Naive thymus-derived CD4-positive, alpha-beta T cell (primary cell): ENCODE measurements at regions of chr6 and their contacts with region 1.

Region 1: DNA sequence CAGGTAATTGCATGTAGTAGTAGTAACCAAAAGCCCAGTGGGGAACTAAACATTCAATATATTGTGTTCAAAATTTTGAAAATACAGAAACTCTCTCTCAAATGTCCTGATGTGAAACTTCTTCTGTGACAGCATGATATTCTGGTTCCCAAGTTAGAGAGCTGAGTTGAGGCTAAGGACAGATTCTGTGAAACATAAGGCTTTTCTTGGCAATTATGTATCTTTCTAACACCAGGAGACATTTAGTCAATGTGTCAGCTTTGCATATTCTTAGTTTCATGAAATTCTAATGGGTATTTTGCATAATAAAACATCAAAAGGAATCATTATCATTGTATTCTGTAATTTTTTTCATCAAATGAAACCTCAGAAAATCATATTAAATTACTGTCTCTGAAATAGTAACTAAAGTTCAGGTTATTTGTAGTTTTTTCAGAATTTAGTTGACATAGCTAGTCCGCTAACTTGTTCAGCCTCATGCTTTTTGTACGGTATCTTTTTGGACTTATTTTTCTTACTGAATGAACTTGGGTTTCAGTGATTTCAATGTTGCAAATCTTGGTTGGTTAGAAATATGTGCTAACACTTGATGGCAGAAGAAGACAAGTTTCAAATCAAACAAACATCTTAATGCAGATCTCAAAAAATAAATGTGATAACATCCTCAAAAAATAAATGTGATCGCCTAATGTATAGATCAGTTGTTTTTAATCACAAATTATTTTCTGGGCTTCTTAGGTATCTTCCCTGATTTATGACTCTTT is 70.4 kb downstream of the AKAP7 start:
- DNase-seq: peak in 2 of 9 donors; percentile 32 to 35
- ATAC-seq: no peak
- H3K4me3 ChIP-seq: no peak overlapping the region
- H3K4me3 Mint-ChIP-seq: peak overlapping the region in 8 of 10 donors; percentile 7 to 49 (median 31)
- H3K27ac ChIP-seq: peak overlapping the region; percentile 20
- H3K27ac Mint-ChIP-seq: peak overlapping the region in 8 of 9 donors; percentile 46 to 89 (median 74)
- H3K4me1 ChIP-seq: peaks cover 12 to 45% of the 10 kb centered on the region in 2 donors
- H3K4me1 Mint-ChIP-seq: peaks cover 36 to 72% (median 65%) of the 10 kb centered on the region in 7 donors
- H3K27me3 ChIP-seq: no peaks in the 10 kb centered on the region
- H3K27me3 Mint-ChIP-seq: no peaks in the 10 kb centered on the region

Region 2: DNA sequence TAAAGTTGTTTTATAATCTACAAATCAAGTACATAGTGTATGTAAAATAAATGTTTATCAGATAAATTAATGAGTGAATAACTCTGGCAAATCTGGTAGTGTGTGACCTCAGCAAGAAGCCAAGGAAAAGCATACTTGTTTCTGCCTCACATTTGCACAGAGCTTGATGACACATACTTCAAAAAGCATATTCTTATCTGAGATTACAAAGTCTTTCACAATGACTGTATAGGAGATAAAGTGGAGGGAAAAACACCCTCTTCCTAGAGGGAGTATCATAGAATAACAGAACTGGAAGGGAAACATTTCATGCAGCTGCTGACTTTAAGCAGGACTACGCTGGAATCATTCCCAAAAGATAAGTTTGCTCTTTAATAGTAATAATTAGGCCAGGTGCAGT is 98.5 kb before region 1 on chr6:
- CTCF ChIA-PET with region 1: no interaction called
- POLR2A ChIA-PET with region 1: no interaction called
- intact Hi-C with region 1: no loop called
- DNase-seq: no peak
- ATAC-seq: no peak
- H3K4me3 ChIP-seq: no peak overlapping the region
- H3K4me3 Mint-ChIP-seq: no peak overlapping the region
- H3K27ac ChIP-seq: no peak overlapping the region
- H3K27ac Mint-ChIP-seq: no peak overlapping the region
- H3K4me1 ChIP-seq: no peaks in the 10 kb centered on the region
- H3K4me1 Mint-ChIP-seq: no peaks in the 10 kb centered on the region
- H3K27me3 ChIP-seq: no peaks in the 10 kb centered on the region
- H3K27me3 Mint-ChIP-seq: peaks cover 0 to 12% (median 3%) of the 10 kb centered on the region in 5 donors

Region 3: GRCh38 chr6:131167773-131168172 is 37.9 kb before region 1 on chr6:
- CTCF ChIA-PET with region 1: no interaction called
- POLR2A ChIA-PET with region 1: no interaction called
- intact Hi-C with region 1: no loop called
- DNase-seq: no peak
- ATAC-seq: no peak
- H3K4me3 ChIP-seq: no peak overlapping the region
- H3K4me3 Mint-ChIP-seq: no peak overlapping the region
- H3K27ac ChIP-seq: no peak overlapping the region
- H3K27ac Mint-ChIP-seq: no peak overlapping the region
- H3K4me1 ChIP-seq: no peaks in the 10 kb centered on the region
- H3K4me1 Mint-ChIP-seq: no peaks in the 10 kb centered on the region
- H3K27me3 ChIP-seq: no peaks in the 10 kb centered on the region
- H3K27me3 Mint-ChIP-seq: no peaks in the 10 kb centered on the region

Region 4: GRCh38 chr6:131182991-131183425 is 22.7 kb before region 1 on chr6:
- CTCF ChIA-PET with region 1: interaction called, 19 read pairs
- POLR2A ChIA-PET with region 1: interaction called, 3 read pairs
- intact Hi-C with region 1: no loop called
- DNase-seq: peak in 8 of 9 donors; percentile 6 to 57 (median 47)
- ATAC-seq: peak; percentile 83
- H3K4me3 ChIP-seq: no peak overlapping the region
- H3K4me3 Mint-ChIP-seq: peak overlapping the region; percentile 10 to 85 (median 72)
- H3K27ac ChIP-seq: no peak overlapping the region
- H3K27ac Mint-ChIP-seq: peak overlapping the region; percentile 86 to 98 (median 94)
- H3K4me1 ChIP-seq: peaks cover 0 to 8% of the 10 kb centered on the region in 2 donors
- H3K4me1 Mint-ChIP-seq: peaks cover 5 to 22% (median 17%) of the 10 kb centered on the region in 7 donors
- H3K27me3 ChIP-seq: no peaks in the 10 kb centered on the region
- H3K27me3 Mint-ChIP-seq: no peaks in the 10 kb centered on the region

Region 5: GRCh38 chr6:131258816-131259476 is 53.3 kb after region 1 on chr6:
- CTCF ChIA-PET with region 1: no interaction called
- POLR2A ChIA-PET with region 1: no interaction called
- intact Hi-C with region 1: no loop called
- DNase-seq: no peak
- ATAC-seq: no peak
- H3K4me3 ChIP-seq: no peak overlapping the region
- H3K4me3 Mint-ChIP-seq: no peak overlapping the region
- H3K27ac ChIP-seq: no peak overlapping the region
- H3K27ac Mint-ChIP-seq: peak overlapping the region in 7 of 9 donors; percentile 1 to 94 (median 63)
- H3K4me1 ChIP-seq: peaks cover 0 to 11% of the 10 kb centered on the region in 2 donors
- H3K4me1 Mint-ChIP-seq: peaks cover 3 to 53% (median 37%) of the 10 kb centered on the region in 7 donors
- H3K27me3 ChIP-seq: no peaks in the 10 kb centered on the region
- H3K27me3 Mint-ChIP-seq: no peaks in the 10 kb centered on the region

Region 6: GRCh38 chr6:131303338-131303954 is 97.8 kb after region 1 on chr6:
- CTCF ChIA-PET with region 1: interaction called, 3 read pairs
- POLR2A ChIA-PET with region 1: no interaction called
- intact Hi-C with region 1: loop called in 1 of 2 experiments (anchors 1 kb)
- DNase-seq: no peak
- ATAC-seq: no peak
- H3K4me3 ChIP-seq: no peak overlapping the region
- H3K4me3 Mint-ChIP-seq: no peak overlapping the region
- H3K27ac ChIP-seq: no peak overlapping the region
- H3K27ac Mint-ChIP-seq: peak overlapping the region in 6 of 9 donors; percentile 2 to 51 (median 28)
- H3K4me1 ChIP-seq: peaks cover 0 to 10% of the 10 kb centered on the region in 2 donors
- H3K4me1 Mint-ChIP-seq: peaks cover 0 to 40% (median 24%) of the 10 kb centered on the region in 7 donors
- H3K27me3 ChIP-seq: no peaks in the 10 kb centered on the region
- H3K27me3 Mint-ChIP-seq: no peaks in the 10 kb centered on the region

Region 7: GRCh38 chr6:131368198-131368911 is 162.7 kb after region 1 on chr6:
- CTCF ChIA-PET with region 1: no interaction called
- POLR2A ChIA-PET with region 1: no interaction called
- intact Hi-C with region 1: loop called in 1 of 2 experiments (anchors 2 kb)
- DNase-seq: no peak
- ATAC-seq: peak; percentile 40
- H3K4me3 ChIP-seq: no peak overlapping the region
- H3K4me3 Mint-ChIP-seq: peak overlapping the region in 7 of 10 donors; percentile 4 to 63 (median 43)
- H3K27ac ChIP-seq: no peak overlapping the region
- H3K27ac Mint-ChIP-seq: peak overlapping the region in 7 of 9 donors; percentile 21 to 81 (median 69)
- H3K4me1 ChIP-seq: no peaks in the 10 kb centered on the region
- H3K4me1 Mint-ChIP-seq: peaks cover 10 to 53% (median 34%) of the 10 kb centered on the region in 7 donors
- H3K27me3 ChIP-seq: no peaks in the 10 kb centered on the region
- H3K27me3 Mint-ChIP-seq: no peaks in the 10 kb centered on the region

Region 8: GRCh38 chr6:131519670-131520436 is 314.2 kb after region 1 on chr6:
- CTCF ChIA-PET with region 1: interaction called, 10 read pairs
- POLR2A ChIA-PET with region 1: interaction called, 5 read pairs
- intact Hi-C with region 1: loop called in 1 of 2 experiments (anchors 1 kb)
- DNase-seq: peak in 7 of 9 donors; percentile 38 to 64 (median 55)
- ATAC-seq: peak; percentile 92
- H3K4me3 ChIP-seq: no peak overlapping the region
- H3K4me3 Mint-ChIP-seq: no peak overlapping the region
- H3K27ac ChIP-seq: no peak overlapping the region
- H3K27ac Mint-ChIP-seq: peak overlapping the region in 6 of 9 donors; percentile 29 to 69 (median 40)
- H3K4me1 ChIP-seq: peaks cover 0 to 9% of the 10 kb centered on the region in 2 donors
- H3K4me1 Mint-ChIP-seq: peaks cover 8 to 25% (median 20%) of the 10 kb centered on the region in 7 donors
- H3K27me3 ChIP-seq: no peaks in the 10 kb centered on the region
- H3K27me3 Mint-ChIP-seq: peaks cover 0 to 8% (median 0%) of the 10 kb centered on the region in 5 donors